ENCODE measurements at regions of chr10 and their contacts with region 1.

Region 1: DNA sequence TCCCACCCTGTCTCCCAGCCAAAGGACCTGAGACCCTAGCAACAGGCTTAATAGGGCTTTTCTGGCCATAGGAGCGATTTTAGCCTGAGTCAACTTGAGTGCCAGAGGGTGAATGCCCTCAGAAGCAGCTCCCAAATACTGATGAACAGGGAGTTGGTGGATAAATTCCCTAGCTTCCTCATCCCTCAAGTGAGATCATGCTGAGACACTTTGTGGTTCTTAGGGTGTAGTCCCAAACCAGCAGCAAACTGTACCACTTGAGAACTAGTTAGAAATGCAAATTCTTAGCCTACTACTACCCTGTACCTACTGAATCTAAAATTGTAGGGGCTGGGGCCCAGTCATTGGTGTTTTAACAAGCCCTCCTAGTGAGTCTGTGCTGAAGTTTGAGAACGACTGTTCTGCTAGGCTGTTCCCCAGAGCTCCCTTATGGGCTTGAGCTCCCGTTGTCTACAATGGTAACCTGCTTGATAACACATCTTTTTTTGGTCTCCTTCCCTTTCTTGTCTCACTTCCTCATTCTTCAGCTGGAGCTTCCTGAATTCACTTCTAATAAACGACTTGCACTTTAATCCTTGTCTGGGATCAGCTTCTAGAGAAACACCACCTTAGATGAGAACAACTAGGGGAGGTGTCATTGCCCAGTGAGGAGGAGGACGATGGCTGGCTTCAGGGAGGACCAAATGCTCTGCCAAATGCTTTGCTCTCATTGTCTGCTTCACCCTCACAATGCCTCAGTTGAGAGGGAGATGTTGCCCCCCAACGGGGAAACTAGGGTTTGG is 18.2 kb upstream of the CDH23 start:
- DNase-seq: peak; percentile 46 to 72 (median 62)
- H3K4me3 ChIP-seq: no peak overlapping the region
- H3K27ac ChIP-seq: peak overlapping the region in 1 of 2 experiments; percentile 31
- H3K4me1 ChIP-seq: peaks cover 9 to 43% (median 27%) of the 10 kb centered on the region in 4 experiments
- H3K27me3 ChIP-seq: no peaks in the 10 kb centered on the region

Region 2: DNA sequence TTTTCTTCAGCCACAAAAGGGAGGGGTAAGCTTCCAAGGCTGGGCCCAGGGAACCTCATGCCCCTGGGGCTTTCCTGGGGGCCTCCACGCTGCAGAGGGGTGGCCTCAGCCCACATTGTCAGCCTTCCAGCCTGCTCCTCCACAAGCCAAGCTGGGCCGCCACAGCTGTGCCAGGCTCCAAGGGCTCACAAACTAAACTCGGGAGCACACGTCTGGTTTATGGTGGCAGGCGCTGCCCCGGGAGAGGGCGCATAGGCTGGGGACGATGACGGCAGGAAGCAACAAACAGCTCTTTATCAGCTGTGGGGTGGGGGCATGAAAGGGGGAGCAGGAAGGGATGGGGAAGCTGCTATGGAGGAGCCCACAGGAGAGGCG is 11.9 kb after region 1 on chr10:
- CTCF ChIA-PET with region 1: interaction called, 14 read pairs
- POLR2A ChIA-PET with region 1: no interaction called
- DNase-seq: peak; percentile 36 to 61 (median 55)
- H3K4me3 ChIP-seq: peak overlapping the region in 1 of 7 experiments; percentile 19
- H3K27ac ChIP-seq: no peak overlapping the region
- H3K4me1 ChIP-seq: peaks cover 0 to 12% (median 10%) of the 10 kb centered on the region in 4 experiments
- H3K27me3 ChIP-seq: peaks cover 0 to 10% (median 0%) of the 10 kb centered on the region in 5 experiments

Measured in common myeloid progenitor, CD34-positive (primary cell).